Mammary epithelial cell (primary cell): ENCODE measurements at regions of chr5 and their contacts with region 1.

Region 1: DNA sequence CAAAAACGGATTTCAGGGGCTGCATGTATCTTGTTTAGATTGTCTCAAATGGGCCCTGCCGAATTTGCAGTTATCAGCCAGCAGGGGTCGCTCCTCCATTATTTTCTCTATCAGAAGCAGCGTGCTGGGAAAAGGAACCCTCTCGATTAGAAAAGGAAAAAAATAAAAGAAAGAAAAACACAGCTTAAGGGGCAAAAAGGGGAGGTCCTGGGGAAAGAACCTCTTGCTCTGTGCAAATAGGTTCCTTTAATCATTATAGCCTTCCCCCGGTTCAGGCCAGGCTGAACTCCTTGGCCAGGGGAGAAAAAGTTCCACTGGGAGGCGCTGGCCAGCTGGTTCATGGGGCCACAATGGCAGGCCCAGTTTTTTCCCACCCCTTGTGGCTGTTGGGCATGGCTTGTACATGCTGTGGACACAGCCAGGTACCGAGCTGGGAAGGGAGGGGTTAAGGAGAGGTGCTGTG is 25.0 kb upstream of the CAPSL start:
- DNase-seq: peak; percentile 7
- H3K4me3 ChIP-seq: no peak overlapping the region
- H3K27ac ChIP-seq: no peak overlapping the region
- H3K4me1 ChIP-seq: no peaks in the 10 kb centered on the region
- H3K27me3 ChIP-seq: no peaks in the 10 kb centered on the region
- CTCF ChIP-seq: peak; percentile 50 to 61

Region 2: GRCh38 chr5:35694481-35694880 is 268.9 kb before region 1 on chr5:
- CTCF ChIA-PET with region 1: no interaction called
- dilution Hi-C with region 1: no loop called
- in situ Hi-C with region 1: no loop called
- intact Hi-C with region 1: no loop called
- DNase-seq: no peak
- H3K4me3 ChIP-seq: no peak overlapping the region
- H3K27ac ChIP-seq: no peak overlapping the region
- H3K4me1 ChIP-seq: no peaks in the 10 kb centered on the region
- H3K27me3 ChIP-seq: no peaks in the 10 kb centered on the region
- CTCF ChIP-seq: no peak

Region 3: DNA sequence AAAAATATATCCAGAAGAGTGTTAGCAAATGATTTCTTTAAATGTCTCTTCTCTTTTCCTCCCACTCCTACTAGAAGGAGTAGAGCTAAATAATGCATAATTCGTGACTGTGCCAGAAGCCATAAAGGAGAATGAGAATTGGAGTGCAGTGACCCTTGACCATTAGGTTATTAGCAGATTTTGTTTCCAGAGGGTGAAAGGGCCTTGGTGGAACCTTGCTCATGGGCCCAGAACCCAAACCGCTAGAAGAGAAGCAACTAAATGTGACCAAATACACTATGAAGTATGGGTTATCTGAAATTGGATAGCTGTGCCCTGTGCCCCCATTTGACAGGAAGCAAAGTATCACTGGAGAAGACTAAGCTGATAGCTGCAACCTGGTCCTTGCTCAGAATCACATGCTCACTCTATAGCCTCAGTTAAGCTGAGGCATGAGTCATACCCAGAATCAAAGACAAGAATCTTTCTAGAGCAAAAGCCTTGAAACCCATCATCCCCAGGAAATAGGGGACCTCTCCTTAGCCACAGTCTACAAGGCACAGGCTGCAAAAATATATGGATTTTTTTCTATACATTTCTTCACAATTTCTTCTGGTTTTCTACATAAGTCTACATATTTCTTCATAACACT is 61.3 kb before region 1 on chr5:
- CTCF ChIA-PET with region 1: no interaction called
- dilution Hi-C with region 1: no loop called
- in situ Hi-C with region 1: no loop called
- intact Hi-C with region 1: loop called (anchors 2 kb)
- DNase-seq: no peak
- H3K4me3 ChIP-seq: no peak overlapping the region
- H3K27ac ChIP-seq: no peak overlapping the region
- H3K4me1 ChIP-seq: no peaks in the 10 kb centered on the region
- H3K27me3 ChIP-seq: no peaks in the 10 kb centered on the region
- CTCF ChIP-seq: no peak

Region 4: GRCh38 chr5:36089989-36090564 is 126.7 kb after region 1 on chr5:
- CTCF ChIA-PET with region 1: no interaction called
- dilution Hi-C with region 1: no loop called
- in situ Hi-C with region 1: no loop called
- intact Hi-C with region 1: loop called (anchors 1 kb)
- DNase-seq: peak; percentile 21
- H3K4me3 ChIP-seq: no peak overlapping the region
- H3K27ac ChIP-seq: no peak overlapping the region
- H3K4me1 ChIP-seq: no peaks in the 10 kb centered on the region
- H3K27me3 ChIP-seq: no peaks in the 10 kb centered on the region
- CTCF ChIP-seq: peak; percentile 21 to 48

Region 5: DNA sequence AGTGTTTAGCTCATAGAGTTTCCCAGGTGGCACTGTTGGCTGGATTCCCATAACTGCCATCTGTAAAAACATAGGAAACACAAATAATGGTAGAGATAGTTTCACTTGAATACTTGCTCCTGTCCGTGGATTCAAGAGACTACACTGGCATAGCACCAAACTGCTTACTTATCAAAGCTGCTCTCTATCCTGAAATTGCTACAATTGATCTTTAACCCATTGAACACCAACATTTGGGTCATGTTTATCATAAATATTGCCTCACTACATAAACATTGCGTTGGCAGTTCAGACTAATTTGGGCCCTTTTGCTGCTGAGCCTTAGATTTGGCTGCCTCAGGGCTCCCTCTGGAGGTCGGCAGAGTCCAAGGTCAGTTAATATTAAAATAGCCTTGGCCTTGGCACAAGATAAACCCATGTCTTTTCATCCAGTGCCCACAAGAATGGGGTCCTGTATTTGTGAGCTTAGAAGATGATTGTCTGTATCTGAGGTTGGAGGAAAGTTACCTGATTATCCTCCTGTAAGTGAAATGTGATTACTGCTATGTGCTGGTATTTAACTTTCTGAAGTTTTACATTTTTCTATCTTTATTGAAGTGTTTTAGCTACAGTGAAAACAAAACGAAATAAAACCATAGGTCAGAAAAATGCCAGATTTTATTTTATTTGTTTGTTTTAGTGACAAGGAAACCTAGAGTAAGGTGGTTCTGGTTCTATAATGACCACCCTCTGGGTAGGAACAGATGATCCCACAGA is 342.3 kb after region 1 on chr5:
- CTCF ChIA-PET with region 1: no interaction called
- dilution Hi-C with region 1: no loop called
- in situ Hi-C with region 1: no loop called
- intact Hi-C with region 1: loop called (anchors 5 kb)
- DNase-seq: peak; percentile 18
- H3K4me3 ChIP-seq: no peak overlapping the region
- H3K27ac ChIP-seq: no peak overlapping the region
- H3K4me1 ChIP-seq: peaks cover 4% of the 10 kb centered on the region
- H3K27me3 ChIP-seq: peaks cover 6% of the 10 kb centered on the region
- CTCF ChIP-seq: peak; percentile 50 to 75

Region 6: DNA sequence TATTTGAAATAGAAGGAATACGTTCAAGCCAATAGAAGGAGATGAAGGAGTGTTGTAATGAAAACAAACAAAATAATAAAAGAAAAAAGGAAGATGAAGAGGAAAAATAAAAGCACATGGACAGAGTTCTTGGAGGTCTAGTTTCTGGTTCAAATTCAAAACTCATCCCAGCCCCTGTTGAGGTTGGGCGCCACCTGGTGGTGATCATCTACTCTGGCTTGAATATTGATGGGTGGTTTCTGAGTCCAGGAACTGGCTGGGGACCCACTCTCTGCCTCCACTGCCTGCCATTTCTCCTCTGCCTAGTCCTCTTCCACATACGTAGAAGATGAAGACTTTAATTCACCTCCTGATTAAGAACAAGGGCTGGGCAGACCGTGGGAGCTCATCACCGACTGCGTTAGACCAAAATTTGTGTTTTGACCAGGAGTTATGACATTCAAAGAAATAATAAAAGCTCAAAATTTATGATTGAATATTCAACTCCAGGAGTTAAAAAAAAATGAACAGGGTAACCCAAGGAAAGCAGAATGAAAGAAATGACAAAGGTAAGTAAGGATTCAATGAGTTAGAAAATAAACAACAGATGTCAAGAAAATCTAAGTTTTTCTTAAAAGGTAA is 544.0 kb after region 1 on chr5:
- CTCF ChIA-PET with region 1: no interaction called
- dilution Hi-C with region 1: no loop called
- in situ Hi-C with region 1: no loop called
- intact Hi-C with region 1: loop called (anchors 10 kb)
- DNase-seq: peak; percentile 42
- H3K4me3 ChIP-seq: no peak overlapping the region
- H3K27ac ChIP-seq: no peak overlapping the region
- H3K4me1 ChIP-seq: peaks cover 12% of the 10 kb centered on the region
- H3K27me3 ChIP-seq: no peaks in the 10 kb centered on the region
- CTCF ChIP-seq: peak; percentile 79 to 86